ENCODE measurements at regions of chr12 and their contacts with region 1.

Region 1: GRCh38 chr12:117236456-117237001 is 46.3 kb upstream of the FBXO21 start:
- DNase-seq: no peak
- H3K4me3 ChIP-seq: no peak overlapping the region
- CTCF ChIP-seq: peak; percentile 64

Region 2: GRCh38 chr12:117255386-117255785 is 18.9 kb after region 1 on chr12:
- CTCF ChIA-PET with region 1: interaction called, 20 read pairs
- POLR2A ChIA-PET with region 1: no interaction called
- DNase-seq: no peak
- H3K4me3 ChIP-seq: no peak overlapping the region
- CTCF ChIP-seq: no peak

Region 3: DNA sequence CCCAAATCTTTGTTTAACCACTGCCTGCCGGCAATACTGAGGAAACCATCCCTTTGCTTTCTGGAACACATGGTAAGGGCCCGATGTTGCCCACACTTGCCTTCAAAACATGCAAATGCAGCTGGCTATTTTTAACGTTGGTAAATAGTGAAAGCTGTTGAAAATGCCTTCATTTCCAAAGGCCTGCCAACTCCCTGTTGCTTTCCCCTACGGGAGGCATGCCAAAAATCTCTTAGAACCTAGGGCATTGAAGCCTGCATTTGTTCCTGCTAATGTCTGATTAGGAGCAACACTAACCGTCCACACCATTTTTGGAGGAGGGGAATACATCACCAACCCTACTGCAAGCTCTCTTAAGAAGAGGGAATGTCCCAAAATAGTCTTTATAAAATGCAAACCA is 277.5 kb after region 1 on chr12:
- CTCF ChIA-PET with region 1: no interaction called
- POLR2A ChIA-PET with region 1: no interaction called
- DNase-seq: no peak
- H3K4me3 ChIP-seq: no peak overlapping the region
- CTCF ChIP-seq: no peak